MCF 10A (cell line): ENCODE measurements at regions of chr11 and their contacts with region 1.

Region 1: DNA sequence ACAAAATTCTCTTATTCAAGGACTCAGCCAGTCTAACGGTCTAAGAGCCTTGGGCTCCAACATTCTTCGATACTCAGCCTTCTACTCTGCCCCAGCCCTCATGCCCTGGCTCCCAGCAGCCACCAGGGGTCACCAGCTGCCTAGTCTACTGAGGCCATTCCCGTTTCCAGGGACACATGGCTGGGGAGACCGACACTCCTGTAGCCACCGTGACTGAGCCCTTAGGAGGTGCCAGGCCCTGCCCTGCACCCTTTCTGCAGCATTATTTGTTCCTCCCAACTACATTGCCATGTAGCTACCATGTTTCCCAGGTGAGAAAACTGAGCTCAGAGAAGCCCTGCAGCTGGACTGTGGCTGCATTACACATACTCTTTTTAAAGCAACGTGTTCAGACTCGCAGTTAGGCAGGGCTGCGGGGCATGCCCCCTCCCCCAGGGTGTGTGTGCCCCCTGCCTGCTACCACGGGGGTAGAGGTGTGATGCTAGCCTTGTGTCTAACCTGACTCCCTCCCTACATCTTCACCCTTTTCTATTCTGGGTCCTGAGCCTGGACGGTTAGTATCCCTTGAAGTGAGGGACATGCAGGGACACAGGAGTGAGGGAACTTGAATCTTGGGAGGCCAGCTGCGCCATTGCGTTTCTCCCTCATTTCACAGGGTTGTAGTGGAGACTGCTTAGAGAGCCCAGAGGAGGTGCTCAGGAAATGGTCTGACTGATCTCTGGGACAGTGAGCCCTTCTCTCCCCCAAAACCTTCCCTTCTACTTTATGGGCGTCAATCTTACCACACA is 17.5 kb downstream of the ATG16L2 start:
- DNase-seq: peak; percentile 82
- H3K4me3 Mint-ChIP-seq: no peak overlapping the region
- H3K27ac Mint-ChIP-seq: no peak overlapping the region
- H3K4me1 Mint-ChIP-seq: peaks cover 9% of the 10 kb centered on the region
- H3K27me3 Mint-ChIP-seq: no peaks in the 10 kb centered on the region
- CTCF ChIP-seq: peak; percentile 93

Region 2: GRCh38 chr11:72807021-72807693 is 24.6 kb before region 1 on chr11:
- CTCF ChIA-PET with region 1: no interaction called
- POLR2A ChIA-PET with region 1: no interaction called
- intact Hi-C with region 1: no loop called
- DNase-seq: peak; percentile 40
- H3K4me3 Mint-ChIP-seq: no peak overlapping the region
- H3K27ac Mint-ChIP-seq: no peak overlapping the region
- H3K4me1 Mint-ChIP-seq: peaks cover 6% of the 10 kb centered on the region
- H3K27me3 Mint-ChIP-seq: no peaks in the 10 kb centered on the region
- CTCF ChIP-seq: no peak

Region 3: GRCh38 chr11:72848846-72849466 is 17.2 kb after region 1 on chr11:
- CTCF ChIA-PET with region 1: interaction called, 24 read pairs
- POLR2A ChIA-PET with region 1: interaction called, 4 read pairs
- intact Hi-C with region 1: loop called (anchors 1 kb)
- DNase-seq: peak; percentile 50
- H3K4me3 Mint-ChIP-seq: no peak overlapping the region
- H3K27ac Mint-ChIP-seq: no peak overlapping the region
- H3K4me1 Mint-ChIP-seq: no peaks in the 10 kb centered on the region
- H3K27me3 Mint-ChIP-seq: no peaks in the 10 kb centered on the region
- CTCF ChIP-seq: peak; percentile 53

Region 4: DNA sequence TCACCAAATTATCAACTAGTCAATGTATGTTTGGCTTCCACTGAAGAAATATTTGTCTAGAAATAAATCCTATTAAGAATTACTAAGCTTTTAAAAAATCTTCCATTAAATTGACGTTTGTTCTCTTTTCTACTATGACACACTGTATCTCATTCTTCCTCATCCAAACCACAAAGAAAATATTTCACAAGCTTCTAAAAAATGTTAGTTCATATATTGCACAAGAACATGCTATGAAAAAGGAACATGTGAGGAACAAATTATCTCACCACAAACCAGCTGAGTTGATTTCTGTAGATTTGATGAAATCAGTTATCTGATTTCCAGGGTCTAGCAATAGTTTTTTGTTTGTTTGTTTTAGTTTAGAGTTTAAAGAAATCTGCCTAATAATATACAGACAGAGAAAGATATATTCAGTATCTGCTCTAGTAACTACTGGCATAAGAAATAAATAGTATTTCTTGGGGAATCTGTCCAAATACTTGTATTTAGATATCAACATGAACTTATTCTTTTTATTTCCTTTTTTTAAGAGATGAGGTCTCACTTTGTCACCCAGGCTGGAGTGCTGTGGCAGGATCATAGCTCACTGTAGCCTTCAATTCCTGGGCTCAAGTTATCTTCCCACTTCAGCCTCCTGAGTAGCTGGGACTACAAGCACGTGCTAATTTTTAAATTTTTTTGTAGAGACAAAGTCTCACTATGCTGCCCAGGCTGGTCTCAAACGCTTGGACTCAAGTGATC is 144.2 kb after region 1 on chr11:
- CTCF ChIA-PET with region 1: no interaction called
- POLR2A ChIA-PET with region 1: no interaction called
- intact Hi-C with region 1: no loop called
- DNase-seq: peak; percentile 71
- H3K4me3 Mint-ChIP-seq: no peak overlapping the region
- H3K27ac Mint-ChIP-seq: no peak overlapping the region
- H3K4me1 Mint-ChIP-seq: peaks cover 28% of the 10 kb centered on the region
- H3K27me3 Mint-ChIP-seq: no peaks in the 10 kb centered on the region
- CTCF ChIP-seq: no peak

Region 5: DNA sequence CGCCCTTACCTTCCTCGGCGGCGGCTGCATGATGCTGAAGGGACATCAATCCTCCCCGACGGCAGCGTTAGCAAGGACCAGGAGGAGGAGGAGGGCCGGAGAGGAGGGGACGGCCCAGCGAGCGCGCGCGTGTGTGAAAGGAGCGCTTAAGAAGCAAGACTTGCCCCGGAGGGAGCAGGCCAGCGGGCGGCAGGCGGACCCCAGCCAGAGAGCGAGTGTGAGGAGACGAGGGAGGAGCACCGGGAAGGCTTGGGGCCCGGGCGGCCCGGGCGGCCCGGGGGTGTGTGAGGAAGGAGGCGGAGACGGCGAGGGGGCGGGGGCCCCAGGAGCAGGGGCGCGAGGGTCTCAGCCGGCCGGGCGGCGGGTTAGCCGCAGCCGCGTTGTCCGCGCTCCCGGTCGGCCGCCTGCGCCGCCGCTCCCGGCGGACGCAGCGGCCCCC is 310.2 kb after region 1 on chr11:
- CTCF ChIA-PET with region 1: interaction called, 5 read pairs
- POLR2A ChIA-PET with region 1: no interaction called
- intact Hi-C with region 1: loop called (anchors 1 kb)
- DNase-seq: peak; percentile 58
- H3K4me3 Mint-ChIP-seq: peak overlapping the region; percentile 99
- H3K27ac Mint-ChIP-seq: peak overlapping the region; percentile 75
- H3K4me1 Mint-ChIP-seq: peaks cover 7% of the 10 kb centered on the region
- H3K27me3 Mint-ChIP-seq: no peaks in the 10 kb centered on the region
- CTCF ChIP-seq: no peak

Region 6: GRCh38 chr11:73242251-73243079 is 410.8 kb after region 1 on chr11:
- CTCF ChIA-PET with region 1: interaction called, 12 read pairs
- POLR2A ChIA-PET with region 1: no interaction called
- intact Hi-C with region 1: loop called (anchors 1 kb)
- DNase-seq: peak; percentile 70
- H3K4me3 Mint-ChIP-seq: no peak overlapping the region
- H3K27ac Mint-ChIP-seq: no peak overlapping the region
- H3K4me1 Mint-ChIP-seq: peaks cover 12% of the 10 kb centered on the region
- H3K27me3 Mint-ChIP-seq: peaks cover 12% of the 10 kb centered on the region
- CTCF ChIP-seq: peak; percentile 98